Heart left ventricle (tissue), 16 donors: ENCODE measurements at regions of chr12 and their contacts with region 1.

Region 1: DNA sequence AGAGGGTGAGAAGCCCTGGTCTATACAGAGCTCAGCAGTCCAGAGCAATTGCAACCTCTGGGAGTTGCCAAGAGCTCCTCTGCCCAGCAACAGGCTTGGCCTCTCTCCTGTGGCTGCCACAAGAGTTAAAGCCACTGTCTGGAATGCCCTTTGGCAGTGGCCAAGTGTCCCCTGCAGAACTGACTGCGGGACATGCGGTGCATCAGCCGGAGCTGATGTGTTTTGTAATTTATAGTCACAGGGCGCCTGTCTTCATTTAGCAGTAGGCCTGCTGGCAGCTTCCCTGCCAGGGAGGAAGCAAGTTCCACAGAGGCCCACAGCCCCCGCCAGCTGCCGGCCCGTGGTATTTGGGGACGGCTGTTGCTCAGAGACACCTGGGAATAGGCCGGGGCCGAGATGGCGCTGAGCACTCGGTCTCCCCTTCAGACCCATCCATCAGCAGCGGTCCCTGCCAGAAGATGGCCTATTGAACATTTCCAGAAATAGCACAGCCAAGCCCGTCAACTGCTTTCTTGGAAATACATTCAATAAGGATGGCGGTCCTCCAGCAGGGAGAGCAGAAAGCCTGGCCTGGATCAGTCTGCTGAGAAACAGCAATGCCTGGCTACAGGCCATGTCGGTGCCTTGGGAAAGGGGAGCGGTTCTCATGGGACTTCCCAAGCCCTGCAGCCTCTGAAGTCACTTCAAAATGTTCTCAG is 217.4 kb downstream of the CRADD start:
- DNase-seq: peak; percentile 87 to 96 (median 91)
- ATAC-seq: peak; percentile 83 to 96 (median 94)
- H3K4me3 ChIP-seq: peak overlapping the region in 9 of 12 donors; percentile 4 to 41 (median 22)
- H3K27ac ChIP-seq: peak overlapping the region; percentile 79 to 90 (median 86)
- H3K4me1 ChIP-seq: peaks cover 10 to 50% (median 36%) of the 10 kb centered on the region in 12 donors
- H3K27me3 ChIP-seq: no peaks in the 10 kb centered on the region
- CTCF ChIP-seq: peak in 1 of 12 donors; percentile 22
- POLR2A ChIP-seq: peak in 1 of 2 donors; percentile 16

Region 2: GRCh38 chr12:93569656-93570551 is 324.6 kb before region 1 on chr12:
- intact Hi-C with region 1: loop called in 8 of 10 experiments (anchors 2 to 10 kb)
- DNase-seq: peak; percentile 90 to 92 (median 91)
- ATAC-seq: peak; percentile 76 to 84 (median 79)
- H3K4me3 ChIP-seq: peak overlapping the region; percentile 61 to 90 (median 72)
- H3K27ac ChIP-seq: peak overlapping the region; percentile 81 to 99 (median 96)
- H3K4me1 ChIP-seq: peaks cover 0 to 35% (median 6%) of the 10 kb centered on the region in 12 donors
- H3K27me3 ChIP-seq: peaks cover 0 to 21% (median 0%) of the 10 kb centered on the region in 9 donors
- CTCF ChIP-seq: peak; percentile 60 to 93 (median 88)
- POLR2A ChIP-seq: no peak

Region 3: GRCh38 chr12:93677195-93678064 is 217.1 kb before region 1 on chr12 and contains the start of gene CRADD:
- intact Hi-C with region 1: loop called in 5 of 10 experiments (anchors 5 to 10 kb)
- DNase-seq: peak; percentile 79 to 90 (median 83)
- ATAC-seq: peak; percentile 86 to 94 (median 92)
- H3K4me3 ChIP-seq: peak within 1 kb of the TSS; percentile 36 to 84 (median 70)
- H3K27ac ChIP-seq: peak within 1 kb of the TSS; percentile 84 to 100 (median 97)
- H3K4me1 ChIP-seq: peaks cover 0 to 52% (median 24%) of the 10 kb centered on the region in 12 donors
- H3K27me3 ChIP-seq: no peaks in the 10 kb centered on the region
- CTCF ChIP-seq: no peak
- POLR2A ChIP-seq: peak in 1 of 2 donors; percentile 73
- total RNA-seq, gene CRADD: 40.1 to 100 (median 56.1) TPM

Region 4: GRCh38 chr12:93766796-93767523 is 127.6 kb before region 1 on chr12:
- intact Hi-C with region 1: loop called in 5 of 10 experiments (anchors 5 to 10 kb)
- DNase-seq: peak in 4 of 5 donors; percentile 37 to 60 (median 50)
- ATAC-seq: peak; percentile 79 to 88 (median 82)
- H3K4me3 ChIP-seq: peak overlapping the region in 1 of 12 donors; percentile 5
- H3K27ac ChIP-seq: peak overlapping the region; percentile 27 to 72 (median 55)
- H3K4me1 ChIP-seq: peaks cover 0 to 56% (median 42%) of the 10 kb centered on the region in 12 donors
- H3K27me3 ChIP-seq: no peaks in the 10 kb centered on the region
- CTCF ChIP-seq: peak; percentile 38 to 81 (median 64)
- POLR2A ChIP-seq: no peak

Region 5: DNA sequence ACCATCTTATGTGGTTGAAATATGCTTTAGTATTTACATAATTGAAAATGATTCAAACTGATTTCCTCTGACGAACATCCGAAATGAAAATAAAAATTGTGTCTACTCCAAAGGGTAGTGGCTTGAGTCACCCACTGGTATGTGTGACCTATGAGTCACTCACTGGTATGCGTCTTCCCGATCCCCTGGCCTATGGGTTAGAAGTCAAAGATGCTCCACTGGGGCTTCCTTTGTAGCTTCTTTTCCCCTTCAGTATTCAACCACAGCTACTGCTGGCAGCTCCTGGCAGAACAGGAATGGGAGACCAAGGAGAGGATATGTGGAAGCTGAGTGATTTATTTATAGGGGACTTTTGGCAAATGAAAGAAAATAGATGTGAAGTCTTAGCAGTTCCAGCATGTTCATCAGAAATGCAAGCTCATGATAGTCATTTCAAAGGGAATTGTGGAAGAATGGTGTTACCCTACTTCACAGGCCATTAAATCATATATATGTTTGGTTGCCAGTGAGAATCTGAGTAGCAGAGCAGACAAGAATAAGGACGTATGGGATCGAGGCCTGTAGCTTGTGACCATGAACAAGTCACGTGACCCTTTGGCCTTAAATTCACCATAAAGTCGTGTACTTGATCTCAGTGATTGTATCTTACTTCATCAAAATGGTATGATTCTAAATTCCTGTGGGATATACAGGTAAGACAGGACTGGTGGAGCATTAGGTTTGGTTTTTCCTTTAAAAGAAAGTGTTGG is 109.1 kb before region 1 on chr12:
- intact Hi-C with region 1: loop called in 1 of 10 experiments (anchors 10 kb)
- DNase-seq: peak in 4 of 5 donors; percentile 40 to 78 (median 52)
- ATAC-seq: peak; percentile 77 to 96 (median 94)
- H3K4me3 ChIP-seq: no peak overlapping the region
- H3K27ac ChIP-seq: peak overlapping the region; percentile 69 to 96 (median 84)
- H3K4me1 ChIP-seq: peaks cover 2 to 50% (median 39%) of the 10 kb centered on the region in 12 donors
- H3K27me3 ChIP-seq: no peaks in the 10 kb centered on the region
- CTCF ChIP-seq: no peak
- POLR2A ChIP-seq: no peak

Region 6: DNA sequence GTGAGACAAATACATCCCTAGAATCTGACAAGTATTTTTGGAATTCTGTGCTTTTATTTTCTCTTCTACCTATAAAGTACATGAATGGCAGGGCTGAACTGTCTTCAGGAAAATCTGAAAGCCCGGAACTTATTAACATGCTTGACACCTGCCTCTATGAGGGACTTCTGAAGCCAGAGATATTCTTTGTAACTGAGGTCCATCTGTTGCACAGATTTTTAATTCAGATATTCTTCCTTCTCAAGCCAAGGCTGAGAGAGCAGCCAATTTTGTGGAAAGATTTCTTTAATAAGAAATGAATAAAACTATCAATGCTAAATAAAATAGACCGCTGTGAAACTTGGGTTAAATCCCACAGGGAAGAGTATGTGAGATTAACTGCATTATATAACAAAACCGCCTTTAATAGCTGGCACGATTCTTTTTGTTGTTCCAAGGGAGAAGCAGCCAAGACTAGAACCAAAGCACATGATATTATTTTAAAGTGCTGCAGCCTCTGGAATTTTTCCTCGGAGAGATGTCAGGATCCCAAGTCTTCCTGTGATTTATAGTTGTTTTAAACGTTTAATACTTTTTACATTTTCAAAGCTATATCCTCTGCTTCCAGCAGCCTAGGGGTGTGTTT is 68.5 kb before region 1 on chr12:
- intact Hi-C with region 1: loop called in 4 of 10 experiments (anchors 5 to 10 kb)
- DNase-seq: no peak
- ATAC-seq: peak in 1 of 4 donors; percentile 48
- H3K4me3 ChIP-seq: peak overlapping the region in 1 of 12 donors; percentile 5
- H3K27ac ChIP-seq: peak overlapping the region; percentile 17 to 73 (median 62)
- H3K4me1 ChIP-seq: peaks cover 0 to 72% (median 52%) of the 10 kb centered on the region in 12 donors
- H3K27me3 ChIP-seq: no peaks in the 10 kb centered on the region
- CTCF ChIP-seq: no peak
- POLR2A ChIP-seq: no peak

Region 7: GRCh38 chr12:93943766-93944165 is 49.2 kb after region 1 on chr12:
- intact Hi-C with region 1: no loop called
- DNase-seq: peak in 1 of 5 donors; percentile 43
- ATAC-seq: peak; percentile 51 to 96 (median 75)
- H3K4me3 ChIP-seq: no peak overlapping the region
- H3K27ac ChIP-seq: no peak overlapping the region
- H3K4me1 ChIP-seq: no peaks in the 10 kb centered on the region
- H3K27me3 ChIP-seq: no peaks in the 10 kb centered on the region
- CTCF ChIP-seq: no peak
- POLR2A ChIP-seq: no peak

Region 8: DNA sequence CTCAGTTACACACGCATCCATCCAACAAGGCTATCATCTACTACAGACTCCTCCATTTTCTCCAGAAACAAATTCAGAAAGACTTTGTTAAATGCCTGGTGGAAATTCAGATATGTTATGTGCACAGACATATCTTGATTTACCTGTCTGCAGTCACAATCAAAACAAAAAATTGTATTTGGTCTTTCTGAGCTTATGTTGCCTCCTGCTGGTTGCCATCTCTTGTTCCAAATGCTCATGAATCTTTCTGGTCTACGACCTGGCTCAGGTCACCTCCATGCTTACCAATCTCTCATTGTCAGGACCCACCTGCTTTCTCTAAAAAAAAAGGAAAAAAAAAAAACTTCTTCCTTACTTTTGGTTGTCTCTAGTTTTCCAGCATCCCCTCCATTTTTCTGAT is 84.6 kb after region 1 on chr12:
- intact Hi-C with region 1: loop called in 1 of 10 experiments (anchors 5 kb)
- DNase-seq: no peak
- ATAC-seq: peak in 2 of 4 donors; percentile 36
- H3K4me3 ChIP-seq: no peak overlapping the region
- H3K27ac ChIP-seq: peak overlapping the region in 1 of 12 donors; percentile 7
- H3K4me1 ChIP-seq: peaks cover 0 to 16% (median 5%) of the 10 kb centered on the region in 12 donors
- H3K27me3 ChIP-seq: no peaks in the 10 kb centered on the region
- CTCF ChIP-seq: peak; percentile 26 to 73 (median 58)
- POLR2A ChIP-seq: no peak